Right lobe of liver (tissue), 6 donors: ENCODE measurements at regions of chr6 and their contacts with region 1.

Region 1: GRCh38 chr6:148947621-148948444 is 201.0 kb downstream of the UST start:
- DNase-seq: peak; percentile 73 to 81 (median 78)
- ATAC-seq: peak; percentile 99 to 100 (median 99)
- H3K4me3 ChIP-seq: peak overlapping the region in 1 of 3 donors; percentile 11
- H3K27ac ChIP-seq: no peak overlapping the region
- H3K4me1 ChIP-seq: peaks cover 0 to 4% (median 2%) of the 10 kb centered on the region in 4 donors
- H3K27me3 ChIP-seq: no peaks in the 10 kb centered on the region
- CTCF ChIP-seq: peak; percentile 79 to 95 (median 90)
- POLR2A ChIP-seq: no peak

Region 2: GRCh38 chr6:148559848-148560433 is 387.9 kb before region 1 on chr6:
- intact Hi-C with region 1: loop called in 1 of 2 experiments (anchors 5 kb)
- DNase-seq: peak; percentile 70 to 78 (median 77)
- ATAC-seq: peak; percentile 92 to 96 (median 94)
- H3K4me3 ChIP-seq: peak overlapping the region; percentile 30 to 48 (median 39)
- H3K27ac ChIP-seq: no peak overlapping the region
- H3K4me1 ChIP-seq: no peaks in the 10 kb centered on the region
- H3K27me3 ChIP-seq: no peaks in the 10 kb centered on the region
- CTCF ChIP-seq: peak; percentile 85 to 99 (median 99)
- POLR2A ChIP-seq: no peak

Region 3: DNA sequence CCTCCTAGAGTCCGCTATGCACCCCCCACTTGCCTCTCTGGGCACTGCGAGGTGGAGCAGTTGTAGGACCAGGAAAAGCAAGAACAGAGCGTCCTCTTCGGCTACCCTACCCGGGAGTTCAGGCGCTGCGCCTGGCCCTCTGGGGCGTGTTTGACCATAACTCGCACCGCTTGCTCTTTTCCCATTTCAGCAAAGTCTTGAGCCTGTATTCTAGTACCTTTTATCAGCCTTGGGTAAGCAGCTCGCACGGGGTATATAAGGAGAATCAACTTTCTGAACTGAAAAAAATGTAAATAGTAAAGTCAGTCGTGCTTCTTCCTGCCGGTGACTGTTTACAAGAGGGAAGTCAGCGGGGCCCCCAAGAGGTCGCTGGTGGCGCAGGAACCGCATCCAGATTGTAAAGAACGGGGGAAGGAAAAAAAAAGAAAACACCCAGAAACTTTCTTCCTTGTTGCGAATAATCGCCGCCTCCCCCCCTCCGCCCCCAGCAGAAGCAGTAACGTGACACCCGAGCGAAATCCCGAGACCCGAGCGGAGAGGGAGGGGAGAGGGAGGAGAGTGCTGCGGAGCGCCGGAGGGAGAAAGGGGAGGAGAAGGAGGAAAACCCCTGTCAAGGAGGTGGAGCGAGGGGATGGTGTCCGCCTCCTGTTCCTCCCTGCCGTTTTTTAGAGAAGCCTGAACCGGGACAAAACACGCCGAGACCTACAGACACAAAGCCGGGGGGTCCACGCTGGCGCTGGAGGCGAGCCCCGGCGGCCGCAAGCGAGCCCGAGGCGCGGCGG is 201.3 kb before region 1 on chr6 and contains the start of gene UST:
- intact Hi-C with region 1: loop called in 1 of 2 experiments (anchors 10 kb)
- DNase-seq: peak; percentile 44 to 75 (median 59)
- ATAC-seq: peak; percentile 73 to 79 (median 76)
- H3K4me3 ChIP-seq: peak within 1 kb of the TSS; percentile 44 to 55 (median 45)
- H3K27ac ChIP-seq: peak within 1 kb of the TSS in 2 of 3 donors; percentile 17 to 18
- H3K4me1 ChIP-seq: peaks cover 0 to 14% (median 2%) of the 10 kb centered on the region in 4 donors
- H3K27me3 ChIP-seq: peaks cover 0 to 6% of the 10 kb centered on the region in 2 donors
- CTCF ChIP-seq: peak in 3 of 4 donors; percentile 7 to 28 (median 17)
- POLR2A ChIP-seq: peak; percentile 25
- total RNA-seq, gene UST: 0.44 to 1.9 (median 0.91) TPM

Region 4: GRCh38 chr6:148771205-148771601 is 176.6 kb before region 1 on chr6:
- intact Hi-C with region 1: no loop called
- DNase-seq: no peak
- ATAC-seq: no peak
- H3K4me3 ChIP-seq: no peak overlapping the region
- H3K27ac ChIP-seq: no peak overlapping the region
- H3K4me1 ChIP-seq: no peaks in the 10 kb centered on the region
- H3K27me3 ChIP-seq: no peaks in the 10 kb centered on the region
- CTCF ChIP-seq: no peak
- POLR2A ChIP-seq: no peak

Region 5: GRCh38 chr6:149529650-149530049 is 581.8 kb after region 1 on chr6:
- intact Hi-C with region 1: no loop called
- DNase-seq: no peak
- ATAC-seq: no peak
- H3K4me3 ChIP-seq: no peak overlapping the region
- H3K27ac ChIP-seq: no peak overlapping the region
- H3K4me1 ChIP-seq: no peaks in the 10 kb centered on the region
- H3K27me3 ChIP-seq: no peaks in the 10 kb centered on the region
- CTCF ChIP-seq: no peak
- POLR2A ChIP-seq: no peak